H1 (cell line): ENCODE measurements at regions of chr17 and their contacts with region 1.

Region 1: DNA sequence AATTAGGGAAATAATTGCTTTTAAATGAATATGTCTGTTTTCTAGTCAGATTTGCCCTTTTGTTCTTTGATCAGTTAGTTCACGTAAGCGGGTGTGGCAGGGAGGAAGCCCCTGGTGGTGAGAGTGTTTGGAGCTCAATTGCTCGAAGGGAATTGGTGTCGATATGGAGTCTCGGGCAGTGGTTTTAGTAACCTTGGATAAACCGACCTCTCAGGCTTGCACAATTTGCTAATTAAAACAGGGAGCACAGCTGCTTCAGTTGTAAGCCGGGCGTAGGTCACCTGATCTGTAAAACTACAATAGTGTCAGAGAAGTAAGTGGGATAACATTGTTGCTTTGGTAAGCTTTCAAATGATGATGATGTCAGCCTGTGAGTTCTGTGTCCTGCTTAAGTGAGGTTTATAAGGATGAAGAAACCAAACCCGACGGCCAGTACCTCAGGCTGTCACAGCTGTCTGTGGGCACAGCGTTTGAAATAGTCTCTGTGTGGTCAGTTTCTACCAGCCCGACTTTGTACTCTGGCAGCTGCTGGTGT is 2.9 kb downstream of the ZNF750 start:
- DNase-seq: no peak
- H3K4me3 ChIP-seq: no peak overlapping the region
- H3K27ac ChIP-seq: no peak overlapping the region
- H3K4me1 ChIP-seq: peaks cover 4 to 18% (median 11%) of the 10 kb centered on the region in 4 experiments; a peak in 5 of 7 replicates
- H3K27me3 ChIP-seq: no peaks in the 10 kb centered on the region
- CTCF ChIP-seq: peak in 2 of 3 experiments; percentile 23 to 27; a peak in 3 of 4 replicates
- EP300 ChIP-seq: no peak
- POLR2A ChIP-seq: no peak
- RAD21 ChIP-seq: no peak

Region 2: GRCh38 chr17:82815354-82815753 is 21.5 kb before region 1 on chr17:
- CTCF ChIA-PET with region 1: interaction called, 10 read pairs
- POLR2A ChIA-PET with region 1: no interaction called
- DNase-seq: no peak
- H3K4me3 ChIP-seq: no peak overlapping the region
- H3K27ac ChIP-seq: no peak overlapping the region
- H3K4me1 ChIP-seq: no peaks in the 10 kb centered on the region
- H3K27me3 ChIP-seq: no peaks in the 10 kb centered on the region
- CTCF ChIP-seq: no peak
- EP300 ChIP-seq: no peak
- POLR2A ChIP-seq: no peak
- RAD21 ChIP-seq: no peak

Region 3: GRCh38 chr17:82823004-82823403 is 13.9 kb before region 1 on chr17:
- CTCF ChIA-PET with region 1: interaction called, 16 read pairs
- POLR2A ChIA-PET with region 1: interaction called, 3 read pairs
- DNase-seq: peak in 1 of 2 experiments; percentile 68
- H3K4me3 ChIP-seq: no peak overlapping the region
- H3K27ac ChIP-seq: no peak overlapping the region
- H3K4me1 ChIP-seq: peaks cover 0 to 2% (median 0%) of the 10 kb centered on the region in 4 experiments; a peak in 2 of 7 replicates
- H3K27me3 ChIP-seq: no peaks in the 10 kb centered on the region
- CTCF ChIP-seq: peak; percentile 53 to 67 (median 60)
- EP300 ChIP-seq: no peak
- POLR2A ChIP-seq: no peak
- RAD21 ChIP-seq: peak; percentile 13 to 48; a peak in 2 of 4 replicates

Region 4: DNA sequence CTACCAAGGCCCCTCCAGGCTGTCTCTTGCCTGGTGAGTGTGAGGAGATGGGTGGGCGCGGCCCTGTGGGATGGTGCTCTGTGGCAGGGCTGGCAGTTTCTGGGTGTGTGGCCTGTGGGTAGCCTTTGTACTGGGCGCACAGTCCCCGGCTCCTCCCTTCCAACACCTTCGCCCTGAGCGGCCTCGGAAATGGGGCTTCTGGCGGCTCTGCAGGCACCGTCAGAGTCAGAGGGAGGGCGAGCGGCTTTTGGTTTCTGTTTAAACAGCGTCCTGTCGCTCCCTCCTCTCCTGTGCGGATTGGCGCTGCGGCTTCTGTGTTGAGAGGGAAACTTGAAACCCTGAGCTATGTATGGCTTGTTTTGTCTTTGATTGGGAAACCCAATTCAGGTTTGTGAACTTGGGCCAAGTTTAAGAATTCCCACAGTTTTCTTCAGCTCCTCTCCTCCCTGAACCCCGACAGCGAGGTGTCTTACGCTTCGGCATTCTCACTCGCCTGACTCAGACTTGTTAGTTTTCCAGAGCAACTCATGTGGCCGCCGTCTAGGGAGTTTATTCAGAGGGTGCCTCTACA is 11.2 kb after region 1 on chr17:
- CTCF ChIA-PET with region 1: interaction called, 10 read pairs
- POLR2A ChIA-PET with region 1: interaction called, 3 read pairs
- DNase-seq: no peak
- H3K4me3 ChIP-seq: no peak overlapping the region
- H3K27ac ChIP-seq: no peak overlapping the region
- H3K4me1 ChIP-seq: no peaks in the 10 kb centered on the region
- H3K27me3 ChIP-seq: no peaks in the 10 kb centered on the region
- CTCF ChIP-seq: no peak
- EP300 ChIP-seq: no peak
- POLR2A ChIP-seq: no peak
- RAD21 ChIP-seq: no peak

Region 5: DNA sequence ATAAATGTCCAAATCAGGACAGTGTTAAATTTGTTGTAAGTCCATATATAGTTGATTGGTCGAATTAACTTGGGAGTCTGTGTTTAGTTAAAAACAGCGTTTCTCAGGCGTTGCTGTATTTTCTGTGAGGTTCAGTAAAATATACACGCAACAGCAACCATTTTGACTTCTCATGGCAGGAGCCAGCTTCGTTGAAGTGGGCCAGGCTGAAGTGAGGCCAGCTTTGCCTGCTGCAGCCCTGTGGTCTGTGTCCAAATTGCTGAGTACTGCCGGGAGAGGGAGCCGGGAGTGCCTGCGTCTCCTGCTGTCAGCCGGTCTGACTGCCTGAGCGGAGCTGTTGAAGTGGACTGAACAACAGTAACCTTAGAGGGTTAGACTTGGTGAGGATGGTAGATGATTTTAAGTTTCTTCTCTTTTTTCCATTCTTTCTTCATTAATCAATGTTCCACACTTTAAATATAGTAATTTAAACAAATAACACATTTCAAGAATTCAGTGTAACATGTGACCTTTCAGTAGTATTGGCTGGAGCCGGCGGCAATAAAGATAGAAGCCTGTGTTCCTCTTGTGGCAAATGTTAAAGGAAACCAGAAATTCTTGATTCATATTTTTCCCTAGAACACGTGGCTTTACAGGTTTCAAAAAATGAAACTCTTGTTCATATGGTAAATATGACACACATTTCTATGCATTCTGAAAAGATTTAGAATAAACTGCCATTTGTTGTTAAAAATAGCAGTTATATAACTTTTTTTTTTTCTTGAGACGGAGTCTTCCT is 39.9 kb after region 1 on chr17:
- CTCF ChIA-PET with region 1: interaction called, 18 read pairs
- POLR2A ChIA-PET with region 1: no interaction called
- DNase-seq: no peak
- H3K4me3 ChIP-seq: no peak overlapping the region
- H3K27ac ChIP-seq: no peak overlapping the region
- H3K4me1 ChIP-seq: peaks cover 0 to 11% (median 3%) of the 10 kb centered on the region in 4 experiments; a peak in 5 of 7 replicates
- H3K27me3 ChIP-seq: no peaks in the 10 kb centered on the region
- CTCF ChIP-seq: peak in 2 of 3 experiments; percentile 17 to 32; a peak in 3 of 4 replicates
- EP300 ChIP-seq: no peak
- POLR2A ChIP-seq: no peak
- RAD21 ChIP-seq: 0 out of 4 replicates have a peak, but pooled peaks of 1 of the 2 experiments have one; percentile 15